ENCODE measurements at regions of chr12 and their contacts with region 1.

Region 1: GRCh38 chr12:110037315-110037714 is 11.0 kb downstream of the C12orf76 start:
- DNase-seq: no peak
- H3K4me3 ChIP-seq: no peak overlapping the region
- H3K27ac ChIP-seq: no peak overlapping the region
- H3K4me1 ChIP-seq: peaks cover 0 to 25% (median 16%) of the 10 kb centered on the region in 4 donors
- H3K27me3 ChIP-seq: no peaks in the 10 kb centered on the region
- CTCF ChIP-seq: no peak
- EP300 ChIP-seq: no peak
- POLR2A ChIP-seq: no peak

Region 2: GRCh38 chr12:109999983-110000505 is 37.3 kb before region 1 on chr12:
- in situ Hi-C with region 1: no loop called
- intact Hi-C with region 1: loop called (anchors 1 kb)
- DNase-seq: peak; percentile 37
- H3K4me3 ChIP-seq: peak overlapping the region; percentile 84 to 98 (median 96)
- H3K27ac ChIP-seq: peak overlapping the region; percentile 81 to 87 (median 83)
- H3K4me1 ChIP-seq: peaks cover 0 to 64% (median 41%) of the 10 kb centered on the region in 4 donors
- H3K27me3 ChIP-seq: no peaks in the 10 kb centered on the region
- CTCF ChIP-seq: no peak
- EP300 ChIP-seq: no peak
- POLR2A ChIP-seq: no peak

Region 3: GRCh38 chr12:110012137-110012536 is 25.2 kb before region 1 on chr12:
- in situ Hi-C with region 1: no loop called
- intact Hi-C with region 1: no loop called
- DNase-seq: peak; percentile 65
- H3K4me3 ChIP-seq: no peak overlapping the region
- H3K27ac ChIP-seq: peak overlapping the region in 2 of 4 donors; percentile 22 to 59
- H3K4me1 ChIP-seq: peaks cover 0 to 16% (median 0%) of the 10 kb centered on the region in 4 donors
- H3K27me3 ChIP-seq: no peaks in the 10 kb centered on the region
- CTCF ChIP-seq: no peak
- EP300 ChIP-seq: no peak
- POLR2A ChIP-seq: no peak